ENCODE measurements at regions of chr1 and their contacts with region 1.

Region 1: GRCh38 chr1:170687621-170688020 is 23.7 kb downstream of the PRRX1 start:
- DNase-seq: no peak
- ATAC-seq: no peak
- H3K4me3 Mint-ChIP-seq: no peak overlapping the region
- H3K27ac Mint-ChIP-seq: no peak overlapping the region
- H3K4me1 Mint-ChIP-seq: 0 out of 2 replicates have a peak, but pooled peaks cover 3% of the 10 kb centered on the region
- H3K27me3 Mint-ChIP-seq: peaks cover 4% of the 10 kb centered on the region; the same call in 1 of the 2 replicates
- CTCF ChIP-seq: no peak

Region 2: GRCh38 chr1:170755795-170756194 is 68.2 kb after region 1 on chr1:
- CTCF ChIA-PET with region 1: no interaction called
- POLR2A ChIA-PET with region 1: no interaction called
- DNase-seq: no peak
- ATAC-seq: no peak
- H3K4me3 Mint-ChIP-seq: no peak overlapping the region
- H3K27ac Mint-ChIP-seq: no peak overlapping the region
- H3K4me1 Mint-ChIP-seq: no peaks in the 10 kb centered on the region
- H3K27me3 Mint-ChIP-seq: no peaks in the 10 kb centered on the region
- CTCF ChIP-seq: no peak

Region 3: GRCh38 chr1:170819781-170820180 is 132.2 kb after region 1 on chr1:
- CTCF ChIA-PET with region 1: no interaction called
- POLR2A ChIA-PET with region 1: no interaction called
- DNase-seq: no peak
- ATAC-seq: no peak
- H3K4me3 Mint-ChIP-seq: no peak overlapping the region
- H3K27ac Mint-ChIP-seq: no peak overlapping the region
- H3K4me1 Mint-ChIP-seq: peaks cover 10% of the 10 kb centered on the region
- H3K27me3 Mint-ChIP-seq: no peaks in the 10 kb centered on the region; the same call in 1 of the 2 replicates
- CTCF ChIP-seq: no peak

Region 4: GRCh38 chr1:170929835-170930554 is 242.4 kb after region 1 on chr1:
- CTCF ChIA-PET with region 1: interaction called, 60 read pairs
- POLR2A ChIA-PET with region 1: no interaction called
- DNase-seq: no peak
- ATAC-seq: peak; percentile 95
- H3K4me3 Mint-ChIP-seq: no peak overlapping the region
- H3K27ac Mint-ChIP-seq: no peak overlapping the region
- H3K4me1 Mint-ChIP-seq: peaks cover 24% of the 10 kb centered on the region
- H3K27me3 Mint-ChIP-seq: no peaks in the 10 kb centered on the region; the same call in 1 of the 2 replicates
- CTCF ChIP-seq: peak; percentile 61